H1 (cell line): ENCODE measurements at regions of chr2 and their contacts with region 1.

Region 1: GRCh38 chr2:71226965-71227560 is at the start of gene PAIP2B:
- DNase-seq: peak; percentile 96 to 99
- H3K4me3 ChIP-seq: peak within 1 kb of the TSS; percentile 79 to 93 (median 80)
- H3K27ac ChIP-seq: peak within 1 kb of the TSS; percentile 60; the same call in 1 of the 2 replicates
- H3K4me1 ChIP-seq: peaks cover 0 to 4% (median 0%) of the 10 kb centered on the region in 4 experiments; a peak in 3 of 7 replicates
- H3K27me3 ChIP-seq: no peaks in the 10 kb centered on the region
- CTCF ChIP-seq: no peak
- EP300 ChIP-seq: peak in 1 of 2 experiments; percentile 25; a peak in 1 of 3 replicates
- POLR2A ChIP-seq: peak; percentile 66 to 75; a peak in 2 of 3 replicates
- RAD21 ChIP-seq: no peak
- total RNA-seq, gene PAIP2B: 30.4 and 31.3 TPM in 2 replicates

Region 2: GRCh38 chr2:71049365-71050360 is 177.4 kb before region 1 on chr2:
- CTCF ChIA-PET with region 1: no interaction called
- POLR2A ChIA-PET with region 1: no interaction called
- DNase-seq: no peak
- H3K4me3 ChIP-seq: no peak overlapping the region
- H3K27ac ChIP-seq: no peak overlapping the region
- H3K4me1 ChIP-seq: no peaks in the 10 kb centered on the region
- H3K27me3 ChIP-seq: no peaks in the 10 kb centered on the region
- CTCF ChIP-seq: no peak
- EP300 ChIP-seq: no peak
- POLR2A ChIP-seq: no peak
- RAD21 ChIP-seq: peak in 1 of 2 experiments; percentile 11; a peak in 1 of 4 replicates

Region 3: GRCh38 chr2:71068218-71069035 is 158.6 kb before region 1 on chr2 and contains the start of gene NAGK:
- CTCF ChIA-PET with region 1: no interaction called
- POLR2A ChIA-PET with region 1: no interaction called
- DNase-seq: peak; percentile 86 to 98
- H3K4me3 ChIP-seq: peak within 1 kb of the TSS; percentile 60 to 96 (median 82)
- H3K27ac ChIP-seq: peak within 1 kb of the TSS; percentile 78
- H3K4me1 ChIP-seq: peaks cover 0 to 6% (median 1%) of the 10 kb centered on the region in 4 experiments; a peak in 4 of 7 replicates
- H3K27me3 ChIP-seq: no peaks in the 10 kb centered on the region
- CTCF ChIP-seq: no peak
- EP300 ChIP-seq: peak in 1 of 2 experiments; percentile 3; a peak in 1 of 3 replicates
- POLR2A ChIP-seq: peak; percentile 85 to 98
- RAD21 ChIP-seq: no peak
- total RNA-seq, gene NAGK: 59.9 and 62.2 TPM in 2 replicates

Region 4: GRCh38 chr2:71215447-71215846 is 11.6 kb before region 1 on chr2:
- CTCF ChIA-PET with region 1: interaction called, 10 read pairs
- POLR2A ChIA-PET with region 1: interaction called, 3 read pairs
- DNase-seq: no peak
- H3K4me3 ChIP-seq: no peak overlapping the region
- H3K27ac ChIP-seq: no peak overlapping the region
- H3K4me1 ChIP-seq: no peaks in the 10 kb centered on the region
- H3K27me3 ChIP-seq: no peaks in the 10 kb centered on the region
- CTCF ChIP-seq: no peak
- EP300 ChIP-seq: no peak
- POLR2A ChIP-seq: no peak
- RAD21 ChIP-seq: no peak

Region 5: GRCh38 chr2:71261534-71261933 is 34.5 kb after region 1 on chr2:
- CTCF ChIA-PET with region 1: no interaction called
- POLR2A ChIA-PET with region 1: no interaction called
- DNase-seq: no peak
- H3K4me3 ChIP-seq: no peak overlapping the region
- H3K27ac ChIP-seq: no peak overlapping the region
- H3K4me1 ChIP-seq: no peaks in the 10 kb centered on the region
- H3K27me3 ChIP-seq: no peaks in the 10 kb centered on the region
- CTCF ChIP-seq: no peak
- EP300 ChIP-seq: no peak
- POLR2A ChIP-seq: no peak
- RAD21 ChIP-seq: no peak

Region 6: DNA sequence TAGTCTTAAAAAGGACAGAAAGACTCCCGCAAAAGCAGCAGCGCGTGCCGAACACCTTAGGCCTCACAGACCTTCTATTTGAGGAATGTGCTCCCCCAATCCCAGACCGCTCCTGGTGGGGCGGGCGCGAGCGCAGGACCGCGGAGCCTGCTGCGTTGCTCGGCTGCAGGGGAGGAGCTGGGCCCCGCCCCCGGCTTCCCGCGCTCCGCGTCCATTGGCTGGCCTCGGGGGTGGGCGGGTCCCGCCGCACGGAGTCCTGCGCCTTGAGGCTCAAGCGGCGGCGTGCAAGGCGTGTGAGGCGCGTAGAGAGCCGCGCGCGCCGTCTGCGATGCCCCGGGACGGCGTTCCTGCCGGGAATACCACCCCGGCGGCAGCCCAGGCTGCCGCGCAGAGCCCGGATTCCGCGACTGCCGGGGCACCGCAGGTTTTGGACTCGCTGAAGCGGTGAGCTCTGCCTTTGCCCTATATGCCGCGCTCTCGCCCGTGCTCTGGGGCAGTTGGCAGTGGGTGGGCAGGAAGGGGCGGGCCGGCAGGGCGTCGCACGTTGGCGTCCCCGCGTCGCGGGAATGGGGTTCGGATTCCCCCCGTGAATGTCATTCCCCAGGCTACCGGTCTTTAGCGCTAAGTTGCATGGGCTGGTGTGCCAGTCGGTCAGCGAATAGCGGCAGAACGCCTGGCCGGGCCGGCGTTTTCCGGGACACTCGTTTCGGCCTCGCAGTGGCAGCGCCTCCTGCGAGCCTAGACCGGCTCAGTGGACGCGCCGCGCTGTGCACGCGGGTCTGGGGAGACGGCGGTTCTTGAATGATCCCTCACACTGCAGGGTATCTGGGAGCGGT is 49.5 kb after region 1 on chr2:
- CTCF ChIA-PET with region 1: interaction called, 40 read pairs
- POLR2A ChIA-PET with region 1: interaction called, 5 read pairs
- DNase-seq: peak; percentile 77 to 98
- H3K4me3 ChIP-seq: peak overlapping the region; percentile 49 to 72 (median 64)
- H3K27ac ChIP-seq: no peak overlapping the region
- H3K4me1 ChIP-seq: peaks cover 0 to 12% (median 7%) of the 10 kb centered on the region in 4 experiments; a peak in 5 of 7 replicates
- H3K27me3 ChIP-seq: peaks cover 0 to 7% (median 2%) of the 10 kb centered on the region in 4 experiments; a peak in 4 of 7 replicates
- CTCF ChIP-seq: no peak
- EP300 ChIP-seq: no peak; a peak in 1 of 3 replicates
- POLR2A ChIP-seq: peak in 1 of 2 experiments; percentile 74; a peak in 2 of 3 replicates
- RAD21 ChIP-seq: no peak; a peak in 1 of 4 replicates

Region 7: DNA sequence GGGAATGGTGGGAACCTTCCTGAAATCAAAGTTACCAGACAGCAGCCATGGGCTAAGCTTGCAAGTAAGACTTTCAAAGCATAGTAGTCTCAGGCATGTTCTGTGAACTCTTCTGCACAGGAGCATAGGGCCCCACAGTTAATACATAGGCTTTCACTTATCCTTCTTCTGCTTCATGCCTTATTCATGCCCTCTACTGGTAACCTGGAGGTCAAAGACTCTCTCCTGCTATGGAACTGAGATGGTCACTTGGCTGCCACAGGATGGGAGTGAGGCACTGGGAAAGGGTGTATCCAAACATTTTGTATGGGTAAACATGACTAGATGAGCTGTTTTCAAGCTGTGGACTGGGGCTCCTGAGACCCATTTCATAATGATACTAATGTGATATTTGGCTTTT is 55.4 kb after region 1 on chr2:
- CTCF ChIA-PET with region 1: interaction called, 40 read pairs
- POLR2A ChIA-PET with region 1: no interaction called
- DNase-seq: no peak
- H3K4me3 ChIP-seq: no peak overlapping the region
- H3K27ac ChIP-seq: no peak overlapping the region
- H3K4me1 ChIP-seq: peaks cover 3 to 14% (median 6%) of the 10 kb centered on the region in 4 experiments; a peak in 6 of 7 replicates
- H3K27me3 ChIP-seq: no peaks in the 10 kb centered on the region
- CTCF ChIP-seq: peak in 2 of 3 experiments; percentile 34 to 37; a peak in 3 of 4 replicates
- EP300 ChIP-seq: no peak
- POLR2A ChIP-seq: no peak
- RAD21 ChIP-seq: peak; percentile 37 to 53; a peak in 3 of 4 replicates

Region 8: DNA sequence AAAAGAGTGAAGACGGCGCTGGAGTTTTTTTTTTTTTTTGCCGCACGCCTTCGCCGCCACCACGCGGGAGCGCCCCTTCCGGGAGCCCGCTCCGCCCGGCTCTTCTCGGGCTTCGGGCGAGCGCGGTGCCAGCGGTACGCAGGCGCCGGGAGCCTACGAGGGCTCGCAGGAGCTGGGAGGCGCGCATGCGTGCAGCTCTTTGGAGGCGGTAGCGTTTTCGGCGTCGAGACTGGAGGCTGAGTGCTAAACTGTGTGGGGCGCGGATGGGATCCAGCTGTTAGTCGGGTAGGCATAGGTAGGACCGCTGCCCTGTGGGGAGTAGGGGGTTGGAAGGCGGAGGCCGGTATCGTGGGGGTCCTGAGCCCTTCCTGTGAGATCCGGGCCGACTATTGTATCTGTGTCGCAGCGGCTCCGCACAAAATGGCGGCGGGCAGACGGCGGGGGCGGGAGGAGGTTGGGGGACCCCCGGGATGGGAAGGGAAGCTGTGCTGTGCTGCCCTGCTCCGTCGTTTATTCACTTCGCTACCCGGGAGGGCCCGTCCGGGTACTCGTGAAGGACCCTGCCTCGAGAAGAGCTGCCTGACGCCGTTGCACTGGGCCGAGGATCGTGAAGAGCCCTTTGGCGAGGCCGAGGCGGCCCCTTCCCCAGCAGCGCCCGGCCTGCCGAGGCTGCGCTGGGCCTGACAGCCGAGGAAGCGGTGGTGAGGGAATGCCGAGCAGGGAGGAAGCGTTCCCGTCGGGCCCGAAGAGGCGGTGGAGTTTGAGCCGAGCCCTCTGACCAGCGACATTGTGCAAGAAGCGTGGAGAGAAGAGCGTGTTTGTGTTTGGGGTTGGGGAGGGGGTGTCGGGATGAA is 104.7 kb after region 1 on chr2 and contains the start of gene ZNF638:
- CTCF ChIA-PET with region 1: interaction called, 19 read pairs
- POLR2A ChIA-PET with region 1: interaction called, 16 read pairs
- DNase-seq: peak; percentile 72 to 91
- H3K4me3 ChIP-seq: peak within 1 kb of the TSS; percentile 69 to 94 (median 90)
- H3K27ac ChIP-seq: peak within 1 kb of the TSS; percentile 98
- H3K4me1 ChIP-seq: peaks cover 4 to 6% (median 4%) of the 10 kb centered on the region in 4 experiments; a peak in 4 of 7 replicates
- H3K27me3 ChIP-seq: no peaks in the 10 kb centered on the region
- CTCF ChIP-seq: peak; percentile 30 to 71 (median 62)
- EP300 ChIP-seq: no peak; a peak in 1 of 3 replicates
- POLR2A ChIP-seq: peak; percentile 77 to 95; a peak in 2 of 3 replicates
- RAD21 ChIP-seq: peak; percentile 20 to 45; a peak in 2 of 4 replicates
- total RNA-seq, gene ZNF638: 143 and 144 TPM in 2 replicates